Left lung (tissue), 14 donors: ENCODE measurements at regions of chr4 and their contacts with region 1.

Region 1: DNA sequence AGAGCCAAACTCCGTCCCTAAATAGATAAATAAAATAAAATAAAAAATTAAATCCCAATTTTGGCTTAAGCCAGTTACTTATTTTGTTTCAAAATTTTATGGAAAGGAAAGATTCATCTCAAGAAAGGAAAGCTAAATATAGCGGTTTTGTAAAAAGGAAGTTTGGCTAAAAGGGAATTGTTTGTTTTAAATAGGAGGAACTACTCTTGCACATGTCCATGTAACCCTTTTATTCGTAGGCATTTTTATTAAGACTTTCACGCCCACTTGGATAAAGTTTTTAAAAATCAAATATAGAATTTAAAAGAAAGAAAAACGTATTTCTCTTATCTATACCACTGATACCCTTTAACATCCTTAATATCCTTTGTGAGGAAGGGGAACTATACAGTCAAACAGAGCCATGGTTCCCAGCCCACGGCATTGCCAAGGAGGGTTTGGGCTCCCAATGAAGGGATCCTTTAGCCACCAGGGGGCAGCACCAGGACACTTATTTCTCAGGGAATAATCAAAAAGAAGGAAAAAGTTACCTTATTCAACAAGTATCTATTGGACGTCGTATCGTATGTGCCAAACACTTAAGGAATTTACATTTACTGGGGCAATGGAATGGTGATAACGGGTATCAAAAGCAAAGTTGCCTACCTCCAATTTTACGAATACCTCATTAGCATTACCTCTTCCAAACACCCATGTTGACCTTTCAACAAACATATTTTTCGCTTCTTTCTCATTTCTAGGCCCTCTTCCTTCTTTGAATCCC is 27.7 kb downstream of the CDKN2AIP start:
- DNase-seq: peak; percentile 60 to 87 (median 81)
- ATAC-seq: peak; percentile 98
- H3K4me3 ChIP-seq: no peak overlapping the region
- H3K27ac ChIP-seq: no peak overlapping the region
- H3K4me1 ChIP-seq: peaks cover 3 to 13% of the 10 kb centered on the region in 2 donors
- H3K27me3 ChIP-seq: no peaks in the 10 kb centered on the region
- CTCF ChIP-seq: peak; percentile 80 to 95

Region 2: DNA sequence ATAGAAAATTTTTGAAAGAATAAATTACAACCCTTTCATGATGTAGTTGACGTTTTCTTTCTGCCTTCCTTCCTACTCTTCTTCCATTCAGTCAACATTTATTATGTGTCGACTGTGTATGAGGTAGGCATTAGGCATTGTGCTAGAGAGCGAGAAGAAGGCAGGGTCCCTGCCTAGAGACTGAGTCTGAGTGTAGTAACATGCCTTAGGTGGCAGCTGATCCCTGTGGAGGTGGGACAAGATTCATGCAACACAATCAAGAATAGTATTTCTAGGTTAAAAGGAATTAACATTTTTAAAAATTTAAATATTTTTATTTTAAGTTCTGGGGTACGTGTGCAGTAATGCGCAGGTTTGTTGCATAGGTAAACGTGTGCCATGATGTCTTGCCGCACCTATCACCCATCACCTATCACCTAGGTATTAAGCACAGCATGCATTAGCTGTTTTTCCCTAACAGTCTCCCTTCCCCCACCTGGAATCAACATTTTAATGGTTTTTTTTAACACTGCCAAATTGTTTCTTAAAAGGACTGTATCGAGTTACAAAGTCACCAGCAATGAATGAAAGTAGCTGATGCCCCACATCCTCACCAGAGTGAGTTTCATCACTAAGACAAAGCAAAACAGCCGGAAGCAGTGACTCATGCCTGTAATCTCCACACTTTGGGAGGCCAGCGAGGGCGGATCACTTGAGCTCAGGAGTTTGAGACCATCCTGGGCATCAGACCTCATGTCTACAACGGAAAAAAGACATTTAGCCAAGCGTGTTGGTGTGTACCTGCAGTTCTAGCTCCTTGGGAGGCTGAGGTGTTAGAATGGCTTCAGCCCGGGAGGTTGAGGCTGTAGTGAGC is 289.0 kb before region 1 on chr4:
- intact Hi-C with region 1: no loop called
- DNase-seq: peak in 1 of 4 donors; percentile 35
- ATAC-seq: peak; percentile 74
- H3K4me3 ChIP-seq: no peak overlapping the region
- H3K27ac ChIP-seq: no peak overlapping the region
- H3K4me1 ChIP-seq: peaks cover 0 to 3% of the 10 kb centered on the region in 2 donors
- H3K27me3 ChIP-seq: no peaks in the 10 kb centered on the region
- CTCF ChIP-seq: no peak

Region 3: GRCh38 chr4:183602557-183603027 is 130.5 kb after region 1 on chr4:
- intact Hi-C with region 1: loop called in 1 of 2 experiments (anchors 10 kb)
- DNase-seq: peak in 1 of 4 donors; percentile 36
- ATAC-seq: peak; percentile 48
- H3K4me3 ChIP-seq: no peak overlapping the region
- H3K27ac ChIP-seq: no peak overlapping the region
- H3K4me1 ChIP-seq: no peaks in the 10 kb centered on the region
- H3K27me3 ChIP-seq: no peaks in the 10 kb centered on the region
- CTCF ChIP-seq: no peak